ENCODE measurements at regions of chr22 and their contacts with region 1.

Region 1: GRCh38 chr22:37792494-37792893 is 15.2 kb upstream of the GCAT start:
- DNase-seq: no peak
- H3K4me3 ChIP-seq: no peak overlapping the region
- H3K27ac ChIP-seq: no peak overlapping the region
- H3K4me1 ChIP-seq: no peaks in the 10 kb centered on the region
- H3K27me3 ChIP-seq: no peaks in the 10 kb centered on the region
- CTCF ChIP-seq: no peak
- EP300 ChIP-seq: no peak
- POLR2A ChIP-seq: no peak

Region 2: DNA sequence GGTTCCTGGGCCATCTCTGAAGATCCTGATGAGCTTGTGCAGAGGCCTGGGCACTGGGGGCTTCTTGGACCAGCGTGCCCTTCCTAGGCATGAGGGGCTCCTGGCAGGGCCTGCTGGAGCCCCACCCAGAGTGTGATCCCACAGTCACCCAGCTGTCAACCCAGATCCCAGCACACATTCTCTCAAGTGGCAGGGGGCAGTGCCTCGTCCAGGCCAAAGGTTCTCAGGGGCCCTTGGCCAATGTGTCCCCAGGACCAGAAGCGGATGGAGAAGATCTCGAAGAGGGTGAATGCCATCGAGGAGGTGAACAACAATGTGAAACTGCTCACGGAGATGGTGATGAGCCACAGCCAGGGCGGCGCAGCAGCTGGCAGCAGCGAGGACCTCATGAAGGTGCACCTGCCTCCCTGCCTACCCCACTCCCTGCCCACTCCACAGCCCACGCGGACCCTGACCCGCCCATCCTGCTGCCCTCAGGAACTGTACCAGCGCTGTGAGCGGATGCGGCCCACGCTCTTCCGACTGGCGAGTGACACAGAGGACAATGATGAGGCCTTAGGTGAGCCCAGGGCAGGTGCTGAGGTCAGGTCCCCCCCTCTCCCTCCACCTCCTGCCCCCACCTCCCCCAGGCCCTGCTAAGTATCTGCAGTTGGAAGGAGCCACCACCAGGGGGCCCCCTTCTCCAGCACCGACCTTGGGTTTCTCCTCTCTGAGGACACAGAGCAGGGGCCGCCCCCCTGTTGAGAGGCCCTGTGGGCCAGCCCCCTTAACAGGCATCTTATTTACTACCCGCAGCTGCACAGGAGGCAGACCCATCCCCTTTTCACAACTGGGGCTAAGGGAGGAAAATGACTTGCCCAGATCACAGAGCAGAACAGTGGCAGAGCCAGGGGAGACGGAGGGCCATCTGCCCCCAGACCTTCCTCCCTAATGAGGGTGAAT is 169.1 kb before region 1 on chr22:
- intact Hi-C with region 1: loop called in 1 of 4 experiments (anchors 5 kb)
- DNase-seq: peak; percentile 59 to 84 (median 74)
- H3K4me3 ChIP-seq: no peak overlapping the region
- H3K27ac ChIP-seq: peak overlapping the region in 1 of 2 donors; percentile 18
- H3K4me1 ChIP-seq: peaks cover 4% of the 10 kb centered on the region
- H3K27me3 ChIP-seq: no peaks in the 10 kb centered on the region
- CTCF ChIP-seq: peak; percentile 39 to 82 (median 62)
- EP300 ChIP-seq: no peak
- POLR2A ChIP-seq: no peak

Region 3: GRCh38 chr22:37643225-37643847 is 149.2 kb before region 1 on chr22:
- intact Hi-C with region 1: loop called in 3 of 4 experiments (anchors 5 to 10 kb)
- DNase-seq: peak; percentile 78 to 93 (median 89)
- H3K4me3 ChIP-seq: no peak overlapping the region
- H3K27ac ChIP-seq: no peak overlapping the region
- H3K4me1 ChIP-seq: peaks cover 2% of the 10 kb centered on the region
- H3K27me3 ChIP-seq: no peaks in the 10 kb centered on the region
- CTCF ChIP-seq: peak; percentile 89 to 94 (median 94)
- EP300 ChIP-seq: no peak
- POLR2A ChIP-seq: no peak

Region 4: DNA sequence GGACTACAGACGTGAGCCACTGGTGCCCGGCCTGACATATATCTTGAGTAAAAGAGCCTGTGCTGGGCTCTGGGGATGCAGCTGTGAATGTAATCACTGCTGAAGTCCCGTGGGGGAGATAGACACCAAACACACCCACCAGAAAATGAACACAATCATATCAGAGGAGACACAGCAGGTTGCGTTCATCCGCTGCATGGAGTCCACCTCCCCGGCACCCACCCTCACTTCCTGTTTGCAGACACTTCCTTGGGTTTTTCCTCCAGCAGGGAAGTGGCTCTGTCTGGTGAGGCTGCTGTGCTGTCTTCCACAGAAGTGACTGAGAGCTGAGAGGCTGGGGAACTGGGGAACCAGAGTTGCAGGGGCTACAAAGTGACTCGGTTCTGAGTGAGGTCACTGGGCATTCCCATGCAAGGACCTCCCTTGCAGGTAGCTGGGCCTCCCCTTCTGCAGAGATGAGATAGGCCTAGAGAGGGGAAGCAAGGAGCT is 120.8 kb after region 1 on chr22:
- intact Hi-C with region 1: no loop called
- DNase-seq: no peak
- H3K4me3 ChIP-seq: no peak overlapping the region
- H3K27ac ChIP-seq: no peak overlapping the region
- H3K4me1 ChIP-seq: no peaks in the 10 kb centered on the region
- H3K27me3 ChIP-seq: no peaks in the 10 kb centered on the region
- CTCF ChIP-seq: no peak
- EP300 ChIP-seq: no peak
- POLR2A ChIP-seq: no peak

Region 5: DNA sequence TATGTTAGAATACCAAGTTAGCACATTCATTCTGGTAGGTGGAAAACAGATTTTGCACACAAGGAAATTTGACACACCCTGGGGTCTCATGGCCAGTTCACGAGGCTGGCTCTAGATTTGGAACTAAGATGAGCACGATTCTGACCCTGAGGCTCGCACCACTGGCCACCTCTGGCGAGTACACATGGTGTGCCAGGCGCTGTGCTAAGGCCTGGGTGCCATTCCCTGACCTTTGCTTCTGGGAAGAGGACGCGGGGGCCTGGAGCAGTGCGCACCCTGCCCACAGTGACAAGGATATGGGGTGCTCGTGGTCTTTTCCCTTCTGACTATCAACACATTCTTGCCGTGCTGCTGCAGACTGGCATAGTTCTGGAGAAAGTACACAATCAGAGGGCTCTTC is 807.0 kb after region 1 on chr22:
- intact Hi-C with region 1: no loop called
- DNase-seq: no peak
- H3K4me3 ChIP-seq: no peak overlapping the region
- H3K27ac ChIP-seq: no peak overlapping the region
- H3K4me1 ChIP-seq: no peaks in the 10 kb centered on the region
- H3K27me3 ChIP-seq: no peaks in the 10 kb centered on the region
- CTCF ChIP-seq: no peak
- EP300 ChIP-seq: no peak
- POLR2A ChIP-seq: no peak

Measured in ovary (tissue), 10 donors.